Activated CD8-positive, alpha-beta memory T cell treated with anti-CD3 and anti-CD28 coated beads, Interleukin-2, amount 10 ng/mL, durations not matched to agents 7 days and 5 days (primary cell): ENCODE measurements at regions of chr6 and their contacts with region 1.

Region 1: GRCh38 chr6:99746261-99746895 is 139.7 kb downstream of the PRDM13 start:
- DNase-seq: peak; percentile 68
- ATAC-seq: peak; percentile 61
- H3K4me3 Mint-ChIP-seq: no peak overlapping the region
- H3K27ac Mint-ChIP-seq: no peak overlapping the region
- H3K4me1 Mint-ChIP-seq: no peaks in the 10 kb centered on the region
- H3K27me3 Mint-ChIP-seq: peaks cover 46% of the 10 kb centered on the region

Region 2: GRCh38 chr6:99467509-99468106 is 278.8 kb before region 1 on chr6:
- CTCF ChIA-PET with region 1: interaction called, 16 read pairs
- DNase-seq: no peak
- ATAC-seq: no peak
- H3K4me3 Mint-ChIP-seq: no peak overlapping the region
- H3K27ac Mint-ChIP-seq: no peak overlapping the region
- H3K4me1 Mint-ChIP-seq: no peaks in the 10 kb centered on the region
- H3K27me3 Mint-ChIP-seq: no peaks in the 10 kb centered on the region

Region 3: DNA sequence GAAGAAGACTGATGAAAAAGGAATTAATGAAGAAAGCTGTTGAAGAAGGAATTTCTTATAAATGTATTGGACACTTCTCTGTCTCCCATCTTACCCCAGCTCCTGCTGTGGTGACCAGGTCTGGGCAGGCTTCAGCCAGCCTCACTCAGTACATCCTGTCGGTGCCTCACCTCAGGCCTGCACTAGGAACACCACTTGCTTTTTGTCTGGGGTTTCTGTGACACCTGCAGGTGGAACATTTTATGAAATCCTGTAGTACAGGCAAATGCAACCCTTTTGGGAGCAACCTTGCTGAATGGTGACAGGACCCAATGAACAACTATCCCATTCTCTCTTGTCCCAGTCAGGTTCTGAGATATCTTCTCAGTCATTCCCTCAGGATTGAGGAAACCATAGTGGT is 10.1 kb before region 1 on chr6:
- CTCF ChIA-PET with region 1: interaction called, 10 read pairs
- DNase-seq: no peak
- ATAC-seq: no peak
- H3K4me3 Mint-ChIP-seq: no peak overlapping the region
- H3K27ac Mint-ChIP-seq: no peak overlapping the region
- H3K4me1 Mint-ChIP-seq: no peaks in the 10 kb centered on the region
- H3K27me3 Mint-ChIP-seq: peaks cover 38% of the 10 kb centered on the region